ENCODE measurements at regions of chr2 and their contacts with region 1.

Region 1: GRCh38 chr2:95345566-95346230 is 48.6 kb downstream of the KCNIP3 start:
- DNase-seq: peak; percentile 67 to 97 (median 84)

Region 2: GRCh38 chr2:95374921-95375471 is 29.3 kb after region 1 on chr2:
- intact Hi-C with region 1: no loop called
- DNase-seq: peak in 3 of 10 donors; percentile 41 to 86 (median 84)

Region 3: GRCh38 chr2:95402370-95403203 is 56.9 kb after region 1 on chr2 and contains the start of gene FAHD2A:
- intact Hi-C with region 1: loop called (anchors 5 kb)
- DNase-seq: peak; percentile 94 to 100 (median 98)

Region 4: GRCh38 chr2:95728878-95729596 is 383.3 kb after region 1 on chr2:
- intact Hi-C with region 1: loop called (anchors 5 kb)
- DNase-seq: peak; percentile 45 to 95 (median 74)

Region 5: GRCh38 chr2:96816836-96817702 is 1471.4 kb after region 1 on chr2:
- intact Hi-C with region 1: no loop called
- DNase-seq: peak in 3 of 10 donors; percentile 69 to 80 (median 78)